B cell (primary cell): ENCODE measurements at regions of chr3 and their contacts with region 1.

Region 1: DNA sequence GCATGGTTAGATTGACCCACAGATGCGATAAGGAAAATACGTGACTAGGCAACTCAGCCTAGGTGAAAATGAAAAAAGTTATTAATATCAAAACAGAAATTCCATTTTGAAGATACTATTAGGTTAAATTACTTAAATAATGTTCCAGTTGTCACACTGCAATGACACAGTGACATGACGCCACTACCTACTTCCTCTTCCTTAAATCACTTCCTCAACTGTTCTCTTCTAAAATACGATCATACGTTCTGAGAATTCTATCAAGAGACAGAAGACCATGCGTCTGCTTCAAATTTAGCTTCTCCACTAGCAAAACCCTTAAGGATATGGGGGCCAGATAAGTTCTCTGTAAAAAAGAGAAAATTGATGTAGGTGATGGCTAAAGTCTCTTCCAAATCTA is 18.2 kb downstream of the CMTM6 start:
- DNase-seq: peak; percentile 86
- ATAC-seq: peak; percentile 83
- H3K4me3 ChIP-seq: peak overlapping the region; percentile 19 to 53 (median 31)
- H3K4me3 Mint-ChIP-seq: peak overlapping the region; percentile 68
- H3K27ac ChIP-seq: peak overlapping the region; percentile 85 to 94
- H3K27ac Mint-ChIP-seq: peak overlapping the region; percentile 75
- H3K4me1 ChIP-seq: peaks cover 13 to 14% of the 10 kb centered on the region in 2 donors
- H3K4me1 Mint-ChIP-seq: peaks cover 30% of the 10 kb centered on the region
- H3K27me3 ChIP-seq: no peaks in the 10 kb centered on the region
- H3K27me3 Mint-ChIP-seq: no peaks in the 10 kb centered on the region
- CTCF ChIP-seq: no peak

Region 2: GRCh38 chr3:32285891-32286290 is 198.5 kb before region 1 on chr3:
- CTCF ChIA-PET with region 1: no interaction called
- POLR2A ChIA-PET with region 1: no interaction called
- intact Hi-C with region 1: no loop called
- DNase-seq: no peak
- ATAC-seq: peak; percentile 39
- H3K4me3 ChIP-seq: no peak overlapping the region
- H3K4me3 Mint-ChIP-seq: peak overlapping the region; percentile 8
- H3K27ac ChIP-seq: peak overlapping the region in 1 of 2 donors; percentile 43
- H3K27ac Mint-ChIP-seq: peak overlapping the region; percentile 34
- H3K4me1 ChIP-seq: peaks cover 24 to 32% of the 10 kb centered on the region in 2 donors
- H3K4me1 Mint-ChIP-seq: peaks cover 30% of the 10 kb centered on the region
- H3K27me3 ChIP-seq: peaks cover 0 to 4% (median 0%) of the 10 kb centered on the region in 4 experiments
- H3K27me3 Mint-ChIP-seq: peaks cover 4% of the 10 kb centered on the region
- CTCF ChIP-seq: no peak

Region 3: DNA sequence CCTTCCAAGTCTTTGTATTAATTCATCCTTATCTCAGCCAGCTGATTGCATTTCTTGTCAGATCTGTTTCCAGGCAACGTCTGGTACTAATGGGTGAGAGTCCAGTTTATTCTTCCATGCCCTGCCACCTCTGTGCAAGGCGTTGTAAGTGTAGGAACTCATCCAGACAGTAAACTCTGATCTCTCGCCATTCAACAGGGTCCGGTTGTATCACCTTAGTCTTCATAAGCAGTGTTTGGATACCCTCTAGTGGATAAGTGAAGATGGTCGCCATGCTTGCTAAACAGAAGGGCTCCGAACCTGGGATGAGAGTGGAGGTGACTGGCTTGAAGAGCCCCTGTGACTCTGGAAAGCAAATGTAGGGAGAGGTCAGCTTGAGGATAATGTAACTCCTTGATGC is 144.4 kb before region 1 on chr3:
- CTCF ChIA-PET with region 1: no interaction called
- POLR2A ChIA-PET with region 1: no interaction called
- intact Hi-C with region 1: no loop called
- DNase-seq: peak; percentile 32
- ATAC-seq: peak; percentile 45
- H3K4me3 ChIP-seq: no peak overlapping the region
- H3K4me3 Mint-ChIP-seq: no peak overlapping the region
- H3K27ac ChIP-seq: no peak overlapping the region
- H3K27ac Mint-ChIP-seq: no peak overlapping the region
- H3K4me1 ChIP-seq: no peaks in the 10 kb centered on the region
- H3K4me1 Mint-ChIP-seq: no peaks in the 10 kb centered on the region
- H3K27me3 ChIP-seq: peaks cover 0 to 2% (median 0%) of the 10 kb centered on the region in 4 experiments
- H3K27me3 Mint-ChIP-seq: no peaks in the 10 kb centered on the region
- CTCF ChIP-seq: peak; percentile 31

Region 4: DNA sequence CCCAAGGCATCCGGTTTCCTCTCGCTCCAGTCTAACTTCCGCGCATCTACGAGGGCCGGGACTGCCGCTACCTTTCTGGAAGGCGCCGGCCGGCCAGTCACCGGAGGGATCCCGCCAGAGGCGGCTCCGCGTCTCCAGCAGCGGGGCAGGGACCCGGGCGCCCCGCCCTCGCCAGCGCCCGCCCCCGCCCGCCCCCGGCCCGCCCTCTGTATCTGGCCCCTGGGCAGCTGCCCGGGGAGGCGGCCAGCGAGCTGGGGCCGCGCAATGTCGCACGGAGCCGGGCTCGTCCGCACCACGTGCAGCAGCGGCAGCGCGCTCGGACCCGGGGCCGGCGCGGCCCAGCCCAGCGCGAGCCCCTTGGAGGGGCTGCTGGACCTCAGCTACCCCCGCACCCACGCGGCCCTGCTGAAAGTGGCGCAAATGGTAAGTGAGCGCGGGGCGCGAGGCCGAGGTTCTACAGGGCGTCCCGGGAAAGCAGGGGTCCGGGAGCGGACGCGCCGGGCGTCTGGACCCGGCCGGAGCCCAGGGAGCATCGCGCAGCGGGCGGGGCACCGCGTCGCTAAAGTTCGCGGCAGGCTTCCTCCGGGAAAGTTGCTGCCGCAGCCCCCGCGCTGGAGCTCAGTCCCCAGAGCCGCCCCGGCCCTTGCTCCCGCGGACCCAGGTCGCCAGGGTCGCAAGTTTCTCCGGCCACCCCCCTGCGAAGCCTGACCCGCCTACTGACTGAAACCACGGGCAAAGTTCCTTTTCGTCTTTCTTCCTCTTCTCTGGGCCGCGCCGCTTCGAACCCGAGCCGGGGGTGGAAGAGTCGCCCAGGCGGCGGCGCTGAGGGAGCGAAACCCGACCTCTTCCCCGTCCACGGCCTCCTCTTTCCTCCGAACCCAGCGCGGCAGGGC is 92.5 kb before region 1 on chr3 and contains the start of gene CMTM7:
- CTCF ChIA-PET with region 1: interaction called, 3 read pairs
- POLR2A ChIA-PET with region 1: interaction called, 14 read pairs
- intact Hi-C with region 1: no loop called
- DNase-seq: peak; percentile 71
- ATAC-seq: peak; percentile 63
- H3K4me3 ChIP-seq: peak within 1 kb of the TSS; percentile 42 to 92 (median 73)
- H3K4me3 Mint-ChIP-seq: peak within 1 kb of the TSS; percentile 96
- H3K27ac ChIP-seq: peak within 1 kb of the TSS; percentile 72 to 82
- H3K27ac Mint-ChIP-seq: peak within 1 kb of the TSS; percentile 97
- H3K4me1 ChIP-seq: peaks cover 28 to 40% of the 10 kb centered on the region in 2 donors
- H3K4me1 Mint-ChIP-seq: peaks cover 52% of the 10 kb centered on the region
- H3K27me3 ChIP-seq: no peaks in the 10 kb centered on the region
- H3K27me3 Mint-ChIP-seq: no peaks in the 10 kb centered on the region
- CTCF ChIP-seq: no peak
- total RNA-seq, gene CMTM7: 68.4 and 71.5 TPM in 2 replicates

Region 5: DNA sequence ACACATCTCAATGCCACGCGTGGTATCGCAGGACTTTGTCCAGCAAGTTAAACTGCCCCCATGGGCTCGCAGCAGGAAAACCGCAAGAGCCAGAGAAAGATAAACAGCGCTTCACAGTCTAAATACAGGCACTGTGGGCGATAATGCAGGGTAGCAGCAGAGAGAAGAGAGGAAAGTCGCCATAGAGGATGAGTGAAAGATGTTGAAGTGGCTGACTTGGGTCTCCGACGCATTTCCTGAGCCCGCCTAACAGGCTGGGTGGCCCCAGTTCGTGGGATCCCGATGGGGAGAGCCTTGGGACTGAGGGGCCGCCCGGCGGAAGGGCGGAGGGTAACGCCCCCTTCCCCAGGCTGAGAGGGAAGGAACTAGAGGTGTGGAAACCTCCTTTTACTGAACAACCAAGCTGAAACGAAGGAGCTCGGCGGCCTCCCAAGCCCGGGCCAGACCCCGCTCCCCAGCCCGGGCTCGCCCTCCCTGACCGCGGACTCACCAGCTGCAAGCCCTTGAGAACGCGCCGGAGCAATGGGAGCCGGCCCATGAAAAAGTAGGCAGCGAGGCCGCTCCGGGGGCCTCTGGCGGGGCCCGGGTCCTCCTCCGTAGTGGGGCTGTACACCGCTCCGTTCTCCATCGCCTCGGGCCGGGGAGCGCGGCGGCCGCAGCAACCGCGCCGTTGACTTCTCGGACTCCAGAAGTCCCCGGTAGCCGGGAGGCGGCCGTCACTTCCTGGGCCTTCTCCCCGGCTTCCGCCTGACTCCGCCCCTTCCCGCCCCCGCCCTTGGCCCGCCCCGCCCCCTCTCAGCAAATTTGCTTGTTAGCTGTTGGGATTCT is 17.9 kb after region 1 on chr3 and contains the start of gene CMTM6:
- CTCF ChIA-PET with region 1: interaction called, 4 read pairs
- POLR2A ChIA-PET with region 1: interaction called, 3 read pairs
- intact Hi-C with region 1: loop called (anchors 1 kb)
- DNase-seq: peak; percentile 86
- ATAC-seq: peak; percentile 83
- H3K4me3 ChIP-seq: peak within 1 kb of the TSS; percentile 82 to 99 (median 97)
- H3K4me3 Mint-ChIP-seq: peak within 1 kb of the TSS; percentile 90
- H3K27ac ChIP-seq: peak within 1 kb of the TSS; percentile 99
- H3K27ac Mint-ChIP-seq: peak within 1 kb of the TSS; percentile 93
- H3K4me1 ChIP-seq: peaks cover 26 to 29% of the 10 kb centered on the region in 2 donors
- H3K4me1 Mint-ChIP-seq: peaks cover 36% of the 10 kb centered on the region
- H3K27me3 ChIP-seq: no peaks in the 10 kb centered on the region
- H3K27me3 Mint-ChIP-seq: no peaks in the 10 kb centered on the region
- CTCF ChIP-seq: no peak
- total RNA-seq, gene CMTM6: 66.3 and 67.7 TPM in 2 replicates

Region 6: GRCh38 chr3:32557643-32558352 is 73.4 kb after region 1 on chr3:
- CTCF ChIA-PET with region 1: no interaction called
- POLR2A ChIA-PET with region 1: no interaction called
- intact Hi-C with region 1: no loop called
- DNase-seq: no peak
- ATAC-seq: no peak
- H3K4me3 ChIP-seq: no peak overlapping the region
- H3K4me3 Mint-ChIP-seq: no peak overlapping the region
- H3K27ac ChIP-seq: no peak overlapping the region
- H3K27ac Mint-ChIP-seq: no peak overlapping the region
- H3K4me1 ChIP-seq: peaks cover 9 to 15% of the 10 kb centered on the region in 2 donors
- H3K4me1 Mint-ChIP-seq: peaks cover 36% of the 10 kb centered on the region
- H3K27me3 ChIP-seq: no peaks in the 10 kb centered on the region
- H3K27me3 Mint-ChIP-seq: no peaks in the 10 kb centered on the region
- CTCF ChIP-seq: no peak